ENCODE measurements at regions of chr13 and their contacts with region 1.

Region 1: DNA sequence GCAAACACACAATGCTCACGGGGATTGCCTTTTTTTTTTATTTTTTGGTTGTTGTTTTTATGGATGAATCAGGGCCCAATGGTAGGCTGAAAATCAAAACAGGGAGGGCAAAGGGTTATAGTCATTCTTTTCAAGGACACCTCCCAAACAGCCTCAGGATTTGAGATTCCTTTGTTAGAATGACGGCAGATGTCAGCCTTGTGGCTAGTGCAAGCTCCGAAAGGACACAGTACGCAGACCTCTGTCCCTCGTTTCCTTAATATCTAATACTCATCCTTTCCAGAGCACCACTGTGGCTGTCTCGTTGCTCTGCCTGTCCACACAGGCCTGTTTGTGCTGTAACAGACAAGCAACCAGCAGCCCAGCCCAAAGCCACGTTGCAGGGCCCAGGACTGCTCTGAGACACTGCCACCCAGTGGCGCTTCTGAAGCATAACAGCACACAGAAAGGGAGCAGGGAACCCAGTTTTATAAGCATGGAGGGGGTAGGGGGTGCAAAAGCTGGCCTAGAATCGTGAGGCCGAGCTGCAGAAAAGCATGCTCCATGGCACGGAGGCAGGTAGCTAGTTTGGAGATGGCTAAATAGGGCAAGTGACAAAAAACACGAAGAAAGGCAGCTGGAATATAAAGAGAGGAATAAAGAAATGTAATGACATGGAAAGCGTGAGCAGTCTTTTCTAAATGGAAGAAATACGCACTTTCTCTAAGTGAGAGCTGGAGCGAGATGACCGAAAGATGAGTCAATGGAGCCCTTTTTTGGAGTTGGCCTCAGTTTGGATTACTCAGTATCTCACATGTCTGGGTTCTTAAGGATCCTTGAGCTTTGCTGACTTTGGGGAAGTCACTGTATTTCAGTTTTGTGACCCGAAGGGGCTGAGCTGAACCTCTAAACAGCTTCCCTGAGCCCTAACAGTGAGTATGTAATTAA is 40.7 kb upstream of the MEDAG start:
- DNase-seq: peak in 1 of 2 donors; percentile 90
- H3K4me3 ChIP-seq: peak overlapping the region in 1 of 2 donors; percentile 4
- H3K27ac ChIP-seq: peak overlapping the region; percentile 87 to 97
- H3K4me1 ChIP-seq: peaks cover 7 to 46% of the 10 kb centered on the region in 2 donors
- H3K27me3 ChIP-seq: no peaks in the 10 kb centered on the region
- CTCF ChIP-seq: peak; percentile 93 to 94 (median 94)

Region 2: GRCh38 chr13:30422054-30422839 is 443.1 kb before region 1 on chr13 and contains the start of gene UBE2L5:
- intact Hi-C with region 1: loop called (anchors 1 kb)
- DNase-seq: peak; percentile 10 to 87
- H3K4me3 ChIP-seq: peak within 1 kb of the TSS; percentile 73 to 75
- H3K27ac ChIP-seq: peak within 1 kb of the TSS; percentile 95 to 98
- H3K4me1 ChIP-seq: peaks cover 8 to 12% of the 10 kb centered on the region in 2 donors
- H3K27me3 ChIP-seq: no peaks in the 10 kb centered on the region
- CTCF ChIP-seq: no peak
- total RNA-seq, gene UBE2L5: not detected

Region 3: GRCh38 chr13:30739761-30740642 is 125.4 kb before region 1 on chr13:
- intact Hi-C with region 1: loop called (anchors 5 kb)
- DNase-seq: no peak
- H3K4me3 ChIP-seq: no peak overlapping the region
- H3K27ac ChIP-seq: peak overlapping the region; percentile 3 to 20
- H3K4me1 ChIP-seq: peaks cover 0 to 21% of the 10 kb centered on the region in 2 donors
- H3K27me3 ChIP-seq: no peaks in the 10 kb centered on the region
- CTCF ChIP-seq: no peak

Region 4: DNA sequence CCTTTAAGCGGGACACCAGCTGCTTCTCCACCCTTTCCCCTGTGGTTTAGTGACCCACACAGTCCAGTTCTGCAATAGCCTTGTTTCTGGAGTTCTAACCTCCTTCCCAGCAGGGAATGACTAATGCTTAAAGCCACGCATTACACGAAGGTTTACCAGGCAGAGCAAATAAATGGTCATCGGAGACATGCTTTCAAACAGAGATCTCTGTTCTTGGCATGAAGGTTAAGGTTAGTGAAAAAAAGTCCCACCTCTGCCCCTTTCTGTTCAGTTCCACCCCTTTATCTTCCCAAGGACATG is 15.4 kb after region 1 on chr13:
- intact Hi-C with region 1: loop called (anchors 1 kb)
- DNase-seq: peak in 1 of 2 donors; percentile 82
- H3K4me3 ChIP-seq: no peak overlapping the region
- H3K27ac ChIP-seq: peak overlapping the region; percentile 92 to 96
- H3K4me1 ChIP-seq: peaks cover 6 to 45% of the 10 kb centered on the region in 2 donors
- H3K27me3 ChIP-seq: no peaks in the 10 kb centered on the region
- CTCF ChIP-seq: no peak

Region 5: GRCh38 chr13:30978981-30979956 is 113.9 kb after region 1 on chr13:
- intact Hi-C with region 1: loop called (anchors 5 kb)
- DNase-seq: no peak
- H3K4me3 ChIP-seq: no peak overlapping the region
- H3K27ac ChIP-seq: no peak overlapping the region
- H3K4me1 ChIP-seq: peaks cover 0 to 14% of the 10 kb centered on the region in 2 donors
- H3K27me3 ChIP-seq: no peaks in the 10 kb centered on the region
- CTCF ChIP-seq: peak in 1 of 3 experiments; percentile 44

Measured in ascending aorta (tissue), 2 donors.